Calu3 (cell line): ENCODE measurements at regions of chr13 and their contacts with region 1.

Region 1: GRCh38 chr13:33228648-33229445 is 56.7 kb downstream of the STARD13 start:
- DNase-seq: no peak
- H3K4me3 Mint-ChIP-seq: peak overlapping the region; percentile 39
- H3K27ac Mint-ChIP-seq: peak overlapping the region; percentile 67
- H3K4me1 Mint-ChIP-seq: peaks cover 25% of the 10 kb centered on the region
- H3K27me3 Mint-ChIP-seq: no peaks in the 10 kb centered on the region
- CTCF ChIP-seq: peak; percentile 35

Region 2: DNA sequence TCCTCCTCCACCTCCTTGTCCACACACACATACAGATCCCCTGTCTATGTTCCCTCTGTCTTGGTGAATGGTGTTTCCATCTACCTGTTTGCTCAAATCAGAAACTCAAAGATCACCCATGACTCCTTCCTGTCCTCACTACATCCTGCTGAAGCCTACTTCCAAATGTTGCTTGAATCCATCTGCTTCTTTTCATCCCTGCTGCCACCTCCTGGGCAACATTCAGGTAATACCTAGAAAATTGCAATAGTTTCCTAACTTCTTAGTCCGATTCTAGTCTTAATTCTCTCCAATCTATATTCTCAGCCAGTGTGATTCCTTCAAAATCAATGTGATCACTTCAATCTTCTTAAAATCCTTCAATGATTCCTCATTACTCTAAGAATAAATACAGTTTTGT is 212.2 kb after region 1 on chr13:
- CTCF ChIA-PET with region 1: no interaction called
- intact Hi-C with region 1: loop called (anchors 1 kb)
- DNase-seq: peak; percentile 33
- H3K4me3 Mint-ChIP-seq: no peak overlapping the region
- H3K27ac Mint-ChIP-seq: no peak overlapping the region
- H3K4me1 Mint-ChIP-seq: peaks cover 9% of the 10 kb centered on the region
- H3K27me3 Mint-ChIP-seq: no peaks in the 10 kb centered on the region
- CTCF ChIP-seq: no peak

Region 3: GRCh38 chr13:33487575-33488243 is 258.9 kb after region 1 on chr13:
- CTCF ChIA-PET with region 1: no interaction called
- intact Hi-C with region 1: loop called (anchors 10 kb)
- DNase-seq: peak; percentile 8
- H3K4me3 Mint-ChIP-seq: no peak overlapping the region
- H3K27ac Mint-ChIP-seq: no peak overlapping the region
- H3K4me1 Mint-ChIP-seq: no peaks in the 10 kb centered on the region
- H3K27me3 Mint-ChIP-seq: no peaks in the 10 kb centered on the region
- CTCF ChIP-seq: no peak

Region 4: GRCh38 chr13:33542283-33543088 is 313.6 kb after region 1 on chr13:
- CTCF ChIA-PET with region 1: no interaction called
- intact Hi-C with region 1: loop called (anchors 1 kb)
- DNase-seq: peak; percentile 96
- H3K4me3 Mint-ChIP-seq: peak overlapping the region; percentile 67
- H3K27ac Mint-ChIP-seq: peak overlapping the region; percentile 94
- H3K4me1 Mint-ChIP-seq: peaks cover 11% of the 10 kb centered on the region
- H3K27me3 Mint-ChIP-seq: no peaks in the 10 kb centered on the region
- CTCF ChIP-seq: peak; percentile 68

Region 5: GRCh38 chr13:33723772-33724435 is 495.1 kb after region 1 on chr13:
- CTCF ChIA-PET with region 1: no interaction called
- intact Hi-C with region 1: loop called (anchors 10 kb)
- DNase-seq: peak; percentile 60
- H3K4me3 Mint-ChIP-seq: no peak overlapping the region
- H3K27ac Mint-ChIP-seq: no peak overlapping the region
- H3K4me1 Mint-ChIP-seq: no peaks in the 10 kb centered on the region
- H3K27me3 Mint-ChIP-seq: no peaks in the 10 kb centered on the region
- CTCF ChIP-seq: no peak